ENCODE measurements at regions of chr3 and their contacts with region 1.

Region 1: GRCh38 chr3:29280404-29281093 is at the start of gene RBMS3:
- DNase-seq: peak; percentile 45
- ATAC-seq: peak; percentile 18
- H3K4me3 ChIP-seq: peak within 1 kb of the TSS; percentile 79
- H3K27ac ChIP-seq: peak within 1 kb of the TSS; percentile 59
- H3K4me1 ChIP-seq: peaks cover 4% of the 10 kb centered on the region
- H3K27me3 ChIP-seq: no peaks in the 10 kb centered on the region
- CTCF ChIP-seq: peak; percentile 28 to 39 (median 35); a peak in 4 of 6 replicates
- EP300 ChIP-seq: no peak
- POLR2A ChIP-seq: no peak
- RAD21 ChIP-seq: peak; percentile 62
- polyA plus RNA-seq, gene RBMS3: 1.3 to 4.3 TPM

Region 2: GRCh38 chr3:28916713-28917499 is 363.6 kb before region 1 on chr3:
- CTCF ChIA-PET with region 1: interaction called, 4 read pairs
- POLR2A ChIA-PET with region 1: no interaction called
- RAD21 ChIA-PET with region 1: interaction called, 4 read pairs
- SMC1A ChIA-PET with region 1: interaction called, 3 read pairs
- in situ Hi-C with region 1: no loop called
- intact Hi-C with region 1: loop called (anchors 2 kb)
- DNase-seq: peak; percentile 61
- ATAC-seq: peak; percentile 95
- H3K4me3 ChIP-seq: no peak overlapping the region
- H3K27ac ChIP-seq: no peak overlapping the region
- H3K4me1 ChIP-seq: peaks cover 20% of the 10 kb centered on the region
- H3K27me3 ChIP-seq: no peaks in the 10 kb centered on the region
- CTCF ChIP-seq: peak; percentile 61 to 78 (median 66)
- EP300 ChIP-seq: no peak
- POLR2A ChIP-seq: no peak
- RAD21 ChIP-seq: peak; percentile 91

Region 3: DNA sequence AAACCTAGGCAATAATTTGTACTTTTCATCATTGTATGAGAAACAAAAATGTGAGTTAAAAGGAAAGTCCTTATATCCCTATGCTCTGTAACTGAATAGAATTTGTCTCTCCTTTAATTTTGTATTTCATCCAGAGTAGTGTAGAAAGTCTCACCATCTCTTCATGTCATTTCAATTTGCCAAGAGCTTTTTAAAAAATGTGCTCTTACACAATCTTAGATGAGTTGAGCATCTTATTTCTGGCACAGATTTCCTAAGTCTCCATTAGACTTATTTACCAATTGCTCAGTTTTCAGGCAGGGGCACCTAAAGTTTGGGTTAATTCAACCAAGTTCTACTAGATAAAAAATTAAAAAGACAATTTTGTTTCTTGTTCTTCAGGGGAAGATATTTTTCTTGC is 201.2 kb before region 1 on chr3:
- CTCF ChIA-PET with region 1: no interaction called
- POLR2A ChIA-PET with region 1: no interaction called
- RAD21 ChIA-PET with region 1: no interaction called
- SMC1A ChIA-PET with region 1: no interaction called
- in situ Hi-C with region 1: no loop called
- intact Hi-C with region 1: no loop called
- DNase-seq: no peak
- ATAC-seq: no peak
- H3K4me3 ChIP-seq: no peak overlapping the region
- H3K27ac ChIP-seq: no peak overlapping the region
- H3K4me1 ChIP-seq: no peaks in the 10 kb centered on the region
- H3K27me3 ChIP-seq: no peaks in the 10 kb centered on the region
- CTCF ChIP-seq: no peak
- EP300 ChIP-seq: no peak
- POLR2A ChIP-seq: no peak
- RAD21 ChIP-seq: no peak

Region 4: DNA sequence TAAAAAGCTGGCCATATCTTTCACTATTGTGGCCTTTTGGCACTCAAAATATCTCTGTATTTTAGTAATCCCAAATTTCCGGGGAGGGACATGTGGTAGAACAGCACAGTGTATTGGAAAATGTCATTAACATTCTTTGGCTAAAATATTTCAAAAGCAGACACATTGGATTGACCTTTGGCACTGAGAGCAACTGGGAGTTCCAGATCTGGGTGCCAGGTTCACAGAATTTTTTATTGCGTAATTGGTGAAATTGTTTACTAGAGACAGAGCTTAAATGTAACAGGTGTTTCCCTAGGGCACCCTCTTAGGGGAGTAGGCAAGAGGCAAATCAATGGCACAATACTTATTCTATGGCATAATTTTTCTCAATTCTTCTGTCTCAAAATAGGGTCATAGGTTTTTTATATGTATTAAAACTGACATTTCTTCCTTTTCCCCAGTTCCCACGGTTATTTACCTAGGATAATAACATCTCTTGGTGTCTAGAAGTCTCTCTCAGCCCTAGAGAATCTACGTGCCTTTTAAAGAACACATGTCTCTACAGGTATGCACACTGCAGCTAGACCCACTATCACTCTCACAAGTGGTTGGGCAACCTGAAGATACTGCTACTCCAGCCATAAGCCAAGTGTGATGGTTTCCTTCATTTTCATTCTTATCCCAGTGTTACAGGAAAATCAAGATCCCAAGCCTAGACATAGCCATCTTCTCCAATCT is 10.9 kb after region 1 on chr3:
- CTCF ChIA-PET with region 1: interaction called, 4 read pairs
- POLR2A ChIA-PET with region 1: interaction called, 10 read pairs
- RAD21 ChIA-PET with region 1: interaction called, 3 read pairs
- SMC1A ChIA-PET with region 1: interaction called, 10 read pairs
- in situ Hi-C with region 1: no loop called
- intact Hi-C with region 1: no loop called
- DNase-seq: no peak
- ATAC-seq: no peak
- H3K4me3 ChIP-seq: no peak overlapping the region
- H3K27ac ChIP-seq: no peak overlapping the region
- H3K4me1 ChIP-seq: no peaks in the 10 kb centered on the region
- H3K27me3 ChIP-seq: no peaks in the 10 kb centered on the region
- CTCF ChIP-seq: no peak
- EP300 ChIP-seq: no peak
- POLR2A ChIP-seq: no peak
- RAD21 ChIP-seq: no peak

Region 5: DNA sequence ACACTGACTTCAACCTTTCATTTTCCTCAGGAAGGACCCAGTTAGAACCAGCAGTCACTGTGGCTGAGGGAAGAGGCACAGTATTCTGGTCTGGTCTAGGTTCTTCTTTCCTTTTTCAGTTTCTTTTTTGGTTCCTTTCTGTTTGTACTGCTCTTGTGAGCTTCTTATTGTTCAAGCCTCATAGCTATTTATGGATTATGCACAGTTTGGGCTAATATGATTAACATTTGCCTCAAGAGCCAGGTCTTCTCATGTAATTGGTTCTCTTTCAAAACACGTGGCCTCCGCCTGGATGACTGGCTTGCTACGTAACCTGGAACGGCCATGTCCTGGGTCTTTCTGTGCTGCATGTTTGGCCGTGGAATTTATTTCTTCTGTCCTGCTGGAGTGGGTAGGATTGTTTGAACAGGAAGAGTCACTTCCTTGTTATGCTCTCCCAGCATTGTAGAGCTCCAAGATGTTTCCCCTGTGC is 43.7 kb after region 1 on chr3:
- CTCF ChIA-PET with region 1: interaction called, 6 read pairs
- POLR2A ChIA-PET with region 1: interaction called, 4 read pairs
- RAD21 ChIA-PET with region 1: interaction called, 17 read pairs
- SMC1A ChIA-PET with region 1: interaction called, 307 read pairs
- in situ Hi-C with region 1: no loop called
- intact Hi-C with region 1: loop called (anchors 2 kb)
- DNase-seq: peak; percentile 84
- ATAC-seq: peak; percentile 95
- H3K4me3 ChIP-seq: no peak overlapping the region
- H3K27ac ChIP-seq: peak overlapping the region; percentile 70
- H3K4me1 ChIP-seq: peaks cover 10% of the 10 kb centered on the region; the same call in 1 of the 2 replicates
- H3K27me3 ChIP-seq: no peaks in the 10 kb centered on the region
- CTCF ChIP-seq: no peak
- EP300 ChIP-seq: no peak
- POLR2A ChIP-seq: no peak
- RAD21 ChIP-seq: no peak

Region 6: DNA sequence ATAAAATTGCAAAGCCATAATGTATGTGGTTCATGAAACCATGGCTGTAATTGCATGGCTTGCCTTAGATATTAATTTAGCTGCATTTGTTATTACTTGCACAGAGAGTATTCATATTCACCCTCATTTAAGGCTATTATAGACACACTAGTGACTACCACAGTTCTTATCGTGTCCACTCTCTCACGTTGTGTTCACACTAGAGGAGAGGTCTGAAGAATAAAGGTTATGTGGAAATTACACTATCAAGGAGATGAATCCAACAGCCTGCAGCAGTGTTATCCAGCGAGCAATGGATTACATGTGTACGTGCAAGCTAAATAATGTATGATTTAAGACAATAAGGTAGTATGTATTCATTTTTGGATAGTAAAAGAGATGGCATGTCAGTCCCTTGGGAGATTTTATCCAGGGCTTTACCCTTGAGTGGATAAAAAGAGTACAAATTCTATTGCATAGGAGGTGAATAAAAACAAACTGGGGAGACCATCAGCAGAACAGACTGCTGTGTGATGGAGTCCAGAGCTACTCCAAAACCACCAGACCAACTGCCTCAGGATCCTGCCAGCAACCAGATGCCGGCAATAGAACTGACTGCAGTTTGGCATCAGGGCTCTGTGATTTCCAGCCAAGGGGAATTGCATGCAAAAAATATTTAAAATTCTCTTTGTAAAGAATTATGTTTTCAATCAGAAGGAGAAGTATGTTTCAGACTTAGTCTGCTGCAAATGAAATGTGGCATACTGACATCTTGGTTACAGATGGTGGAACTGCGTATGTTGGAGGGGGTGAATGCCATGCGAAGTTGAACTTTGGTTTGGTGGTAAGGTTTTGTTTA is 146.9 kb after region 1 on chr3:
- CTCF ChIA-PET with region 1: interaction called, 3 read pairs
- POLR2A ChIA-PET with region 1: no interaction called
- RAD21 ChIA-PET with region 1: interaction called, 10 read pairs
- SMC1A ChIA-PET with region 1: interaction called, 8 read pairs
- in situ Hi-C with region 1: no loop called
- intact Hi-C with region 1: loop called (anchors 5 kb)
- DNase-seq: no peak
- ATAC-seq: no peak
- H3K4me3 ChIP-seq: no peak overlapping the region
- H3K27ac ChIP-seq: no peak overlapping the region
- H3K4me1 ChIP-seq: no peaks in the 10 kb centered on the region
- H3K27me3 ChIP-seq: no peaks in the 10 kb centered on the region
- CTCF ChIP-seq: no peak
- EP300 ChIP-seq: no peak
- POLR2A ChIP-seq: no peak
- RAD21 ChIP-seq: no peak

Region 7: DNA sequence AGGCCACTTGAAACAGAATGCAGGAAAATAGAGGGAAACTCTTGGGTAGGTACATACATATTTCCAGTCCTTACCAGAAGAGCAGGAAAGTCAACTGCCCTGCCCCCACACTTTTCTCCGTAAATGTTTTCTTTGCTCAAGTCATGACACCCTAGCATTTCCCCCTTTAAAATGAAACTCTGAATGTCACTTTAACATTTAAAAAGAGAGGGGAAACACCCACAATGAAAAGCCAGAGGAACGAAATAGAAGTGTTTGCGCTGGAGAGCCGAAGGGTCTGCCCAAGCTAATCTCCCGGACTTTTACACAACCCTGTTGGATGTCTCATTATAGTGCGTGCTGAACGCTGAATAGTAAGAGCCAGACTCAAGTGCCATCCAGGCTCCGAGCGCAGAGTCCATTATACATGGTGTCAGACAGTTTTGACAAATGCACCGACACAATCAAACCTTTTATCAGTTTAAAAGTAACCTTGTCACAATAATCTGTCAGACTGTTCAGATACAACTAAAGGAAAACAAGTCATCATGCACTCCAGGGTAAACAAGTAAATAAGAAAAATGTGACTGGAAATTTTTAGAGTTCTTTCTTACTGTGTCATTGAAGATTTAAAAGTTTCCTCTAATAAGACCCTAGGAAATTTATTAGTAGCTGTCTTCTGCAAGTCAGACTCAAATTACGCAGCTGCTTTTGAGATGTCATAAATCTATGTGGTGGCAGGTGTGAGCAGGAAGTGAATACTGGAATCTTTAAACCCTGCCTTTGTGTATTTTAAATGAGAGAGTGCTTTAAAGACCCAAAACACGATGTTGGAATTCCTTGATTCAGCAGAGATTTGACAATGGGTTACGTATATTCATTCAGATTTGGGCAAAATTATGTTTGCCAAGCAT is 160.1 kb after region 1 on chr3:
- CTCF ChIA-PET with region 1: no interaction called
- POLR2A ChIA-PET with region 1: no interaction called
- RAD21 ChIA-PET with region 1: no interaction called
- SMC1A ChIA-PET with region 1: no interaction called
- in situ Hi-C with region 1: no loop called
- intact Hi-C with region 1: no loop called
- DNase-seq: no peak
- ATAC-seq: peak; percentile 28; the same call in 1 of the 3 replicates
- H3K4me3 ChIP-seq: no peak overlapping the region
- H3K27ac ChIP-seq: no peak overlapping the region
- H3K4me1 ChIP-seq: no peaks in the 10 kb centered on the region
- H3K27me3 ChIP-seq: no peaks in the 10 kb centered on the region
- CTCF ChIP-seq: no peak
- EP300 ChIP-seq: no peak
- POLR2A ChIP-seq: no peak
- RAD21 ChIP-seq: no peak

Region 8: DNA sequence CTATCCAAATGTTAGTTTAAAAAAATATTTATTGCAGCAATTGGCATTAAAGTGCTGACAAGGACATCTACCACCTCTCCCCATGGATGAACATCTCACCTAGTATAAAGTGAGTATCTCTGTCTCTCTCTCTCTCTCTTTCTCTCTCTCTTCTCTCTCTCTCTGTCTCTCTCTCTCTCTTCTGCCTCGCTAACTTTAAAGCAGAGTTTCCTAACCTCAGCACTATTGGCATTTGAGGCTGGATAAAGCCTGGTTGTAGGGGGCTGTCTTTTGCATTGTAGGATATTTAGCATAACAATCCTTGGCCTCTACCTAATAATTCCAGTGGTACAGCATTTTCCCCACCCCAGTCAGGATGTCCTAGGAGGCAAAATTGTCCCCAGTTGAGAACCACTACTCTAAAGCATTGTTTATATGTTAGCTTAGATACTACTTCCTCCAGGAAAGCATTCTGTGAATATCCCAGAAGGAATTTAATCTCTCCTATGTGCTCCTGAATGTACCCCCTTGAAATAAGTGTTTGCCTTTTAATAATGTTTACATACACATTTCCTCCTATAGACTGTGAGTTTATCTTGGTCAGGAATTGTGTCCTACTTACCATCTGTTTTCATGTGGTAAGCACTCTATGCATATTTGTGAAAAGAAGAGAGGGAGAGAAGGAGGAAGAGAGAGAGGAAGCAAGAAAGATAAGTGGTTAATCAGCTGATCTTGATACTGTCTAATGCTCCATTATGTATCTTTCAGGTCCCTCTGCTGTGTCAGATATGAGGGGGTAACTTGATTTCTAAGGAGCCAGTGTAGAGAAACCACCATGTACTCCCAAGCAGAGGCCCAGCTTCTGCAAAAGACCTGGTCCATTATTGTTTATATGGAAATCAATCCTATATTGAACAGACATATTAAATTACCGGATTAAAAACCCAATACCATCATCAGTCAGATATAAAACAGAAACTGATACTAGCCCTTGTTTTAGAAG is 346.9 kb after region 1 on chr3:
- CTCF ChIA-PET with region 1: no interaction called
- POLR2A ChIA-PET with region 1: no interaction called
- RAD21 ChIA-PET with region 1: no interaction called
- SMC1A ChIA-PET with region 1: no interaction called
- in situ Hi-C with region 1: no loop called
- intact Hi-C with region 1: no loop called
- DNase-seq: no peak
- ATAC-seq: peak; percentile 46; the same call in 2 of the 3 replicates
- H3K4me3 ChIP-seq: no peak overlapping the region
- H3K27ac ChIP-seq: no peak overlapping the region
- H3K4me1 ChIP-seq: no peaks in the 10 kb centered on the region
- H3K27me3 ChIP-seq: no peaks in the 10 kb centered on the region
- CTCF ChIP-seq: no peak
- EP300 ChIP-seq: no peak
- POLR2A ChIP-seq: no peak
- RAD21 ChIP-seq: no peak